ENCODE measurements at regions of chr6 and their contacts with region 1.

Region 1: DNA sequence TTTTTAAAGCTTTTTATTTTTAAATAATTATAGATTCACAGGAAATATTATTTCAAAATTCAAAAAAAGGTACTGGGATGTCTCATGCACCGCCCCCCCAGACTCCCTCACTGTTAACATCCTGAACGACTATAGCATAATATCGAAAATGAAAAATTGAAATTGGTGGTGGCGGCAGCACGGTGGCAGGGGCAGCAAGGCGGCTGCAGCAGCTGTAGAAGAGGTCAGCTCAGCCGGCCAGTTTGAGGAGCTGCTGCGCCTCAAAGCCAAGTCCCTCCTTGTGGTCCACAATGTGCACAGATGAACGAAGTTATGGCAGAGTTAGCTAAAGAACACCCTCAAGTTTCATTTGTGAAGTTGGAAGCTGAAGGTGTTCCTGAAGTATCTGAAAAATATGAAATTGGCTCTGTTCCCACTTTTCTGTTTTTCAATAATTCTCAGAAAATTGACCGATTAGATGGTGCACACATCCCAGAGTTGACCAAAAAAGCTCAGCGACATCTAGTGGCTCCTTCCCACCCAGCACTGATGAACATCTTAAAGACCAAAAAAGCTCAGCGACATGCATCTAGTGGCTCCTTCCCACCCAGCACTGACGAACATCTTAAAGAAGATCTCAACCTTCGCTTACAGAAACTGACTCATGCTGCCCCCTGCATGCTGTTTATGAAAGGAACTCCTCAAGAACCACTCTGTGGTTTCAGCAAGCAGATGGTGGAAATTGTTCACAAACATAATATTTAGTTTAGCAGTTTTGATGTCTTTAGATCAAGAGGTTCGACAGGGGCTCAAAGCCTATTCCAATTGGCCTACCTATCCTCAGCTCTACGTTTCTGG is 100.8 kb downstream of the FAM217A start:
- DNase-seq: peak; percentile 89
- H3K4me3 ChIP-seq: no peak overlapping the region
- H3K27ac ChIP-seq: no peak overlapping the region
- H3K27me3 ChIP-seq: no peaks in the 10 kb centered on the region
- CTCF ChIP-seq: peak; percentile 76

Region 2: GRCh38 chr6:3742426-3743344 is 235.4 kb before region 1 on chr6:
- CTCF ChIA-PET with region 1: interaction called, 86 read pairs
- POLR2A ChIA-PET with region 1: no interaction called
- DNase-seq: no peak
- H3K4me3 ChIP-seq: no peak overlapping the region; the same call in 1 of the 2 replicates
- H3K27ac ChIP-seq: no peak overlapping the region
- H3K27me3 ChIP-seq: no peaks in the 10 kb centered on the region
- CTCF ChIP-seq: peak; percentile 92

Region 3: DNA sequence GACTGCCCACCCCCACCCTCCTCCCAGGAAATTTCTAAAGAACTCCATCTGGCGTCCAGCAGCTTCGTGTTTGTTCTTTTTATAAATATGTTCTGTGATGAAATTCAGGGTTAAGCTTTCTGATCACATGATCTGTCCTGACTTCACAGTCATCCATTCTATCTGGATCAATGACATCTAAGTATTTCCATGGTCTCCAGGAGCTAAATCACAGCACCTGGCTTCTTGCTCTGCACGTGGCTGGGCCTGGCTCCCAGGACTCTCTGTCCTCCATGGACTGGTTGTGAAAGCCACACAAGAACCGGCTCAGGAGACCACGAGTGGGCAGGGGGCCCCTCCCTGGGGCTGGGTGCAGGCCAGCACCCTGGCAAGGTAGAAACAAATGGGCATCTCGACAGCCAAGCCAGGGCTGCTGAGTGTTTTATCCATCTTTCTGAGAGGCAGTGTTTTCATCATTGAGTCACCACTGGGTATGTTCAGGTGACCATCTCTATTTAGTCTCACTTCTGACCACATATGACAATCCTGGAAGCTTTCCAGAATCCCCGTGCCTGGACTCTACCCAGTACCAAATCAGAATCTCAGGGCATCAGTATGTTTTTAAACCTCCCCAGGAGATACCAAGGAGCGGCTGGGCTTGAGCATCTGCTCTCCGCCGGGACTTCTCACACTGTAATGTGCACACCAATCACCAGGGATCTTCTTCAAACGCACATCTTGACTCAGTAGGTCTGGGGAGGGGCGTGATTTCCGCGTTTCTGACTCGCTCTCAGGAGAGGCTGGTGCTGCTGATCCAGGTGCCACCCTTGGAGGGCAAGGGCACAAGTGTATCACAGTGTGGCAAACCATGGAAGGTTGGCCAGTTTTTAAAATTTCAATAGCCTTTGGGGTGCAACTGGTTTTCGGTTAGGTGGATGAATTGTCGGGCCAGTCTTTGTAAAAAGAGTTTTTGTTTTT is 194.9 kb before region 1 on chr6:
- CTCF ChIA-PET with region 1: no interaction called
- POLR2A ChIA-PET with region 1: no interaction called
- DNase-seq: peak; percentile 44
- H3K4me3 ChIP-seq: no peak overlapping the region
- H3K27ac ChIP-seq: peak overlapping the region; percentile 52
- H3K27me3 ChIP-seq: no peaks in the 10 kb centered on the region
- CTCF ChIP-seq: no peak

Region 4: GRCh38 chr6:3848925-3849605 is 129.0 kb before region 1 on chr6 and contains the start of gene FAM50B:
- CTCF ChIA-PET with region 1: interaction called, 70 read pairs
- POLR2A ChIA-PET with region 1: interaction called, 7 read pairs
- DNase-seq: peak; percentile 57
- H3K4me3 ChIP-seq: peak within 1 kb of the TSS; percentile 64
- H3K27ac ChIP-seq: peak within 1 kb of the TSS; percentile 65
- H3K27me3 ChIP-seq: no peaks in the 10 kb centered on the region
- CTCF ChIP-seq: peak; percentile 80
- polyA plus RNA-seq, gene FAM50B: 4.5 and 5.5 TPM in 2 replicates

Region 5: DNA sequence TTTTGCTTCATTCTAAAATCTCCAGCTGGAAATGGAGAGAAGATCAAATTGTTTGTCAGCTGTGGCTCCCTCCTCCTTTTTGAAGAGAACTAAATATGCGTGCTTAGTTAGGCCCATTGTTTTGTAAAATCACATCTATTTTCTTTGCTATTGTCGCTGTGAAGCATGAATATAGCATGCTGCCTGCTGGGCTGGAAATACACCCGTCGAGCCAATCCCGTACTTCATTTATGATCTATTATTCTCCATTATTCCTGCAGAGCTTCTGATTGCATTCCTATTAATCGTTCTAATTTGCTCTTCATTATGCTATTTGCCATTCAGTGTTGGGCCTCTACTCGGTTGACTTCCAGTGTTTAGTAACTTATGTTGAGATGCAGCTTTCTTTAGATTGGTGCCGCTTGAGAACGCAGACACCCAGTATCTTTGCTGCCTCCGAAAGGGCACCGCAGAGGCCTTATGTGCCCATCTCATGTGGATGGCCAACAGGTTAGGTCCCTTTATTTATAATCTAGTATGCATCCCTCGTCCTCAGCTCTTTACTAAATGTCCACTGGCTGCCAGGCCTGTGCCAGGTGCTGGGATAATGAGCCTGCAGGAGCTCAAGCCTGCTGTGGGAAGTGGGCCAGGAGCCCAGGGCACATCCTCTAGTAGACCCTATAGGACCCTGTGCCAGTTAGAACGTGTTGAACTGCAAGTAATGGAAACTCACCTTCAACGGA is 83.3 kb before region 1 on chr6:
- CTCF ChIA-PET with region 1: interaction called, 19 read pairs
- POLR2A ChIA-PET with region 1: no interaction called
- DNase-seq: no peak
- H3K4me3 ChIP-seq: no peak overlapping the region
- H3K27ac ChIP-seq: no peak overlapping the region
- H3K27me3 ChIP-seq: no peaks in the 10 kb centered on the region
- CTCF ChIP-seq: no peak

Region 6: DNA sequence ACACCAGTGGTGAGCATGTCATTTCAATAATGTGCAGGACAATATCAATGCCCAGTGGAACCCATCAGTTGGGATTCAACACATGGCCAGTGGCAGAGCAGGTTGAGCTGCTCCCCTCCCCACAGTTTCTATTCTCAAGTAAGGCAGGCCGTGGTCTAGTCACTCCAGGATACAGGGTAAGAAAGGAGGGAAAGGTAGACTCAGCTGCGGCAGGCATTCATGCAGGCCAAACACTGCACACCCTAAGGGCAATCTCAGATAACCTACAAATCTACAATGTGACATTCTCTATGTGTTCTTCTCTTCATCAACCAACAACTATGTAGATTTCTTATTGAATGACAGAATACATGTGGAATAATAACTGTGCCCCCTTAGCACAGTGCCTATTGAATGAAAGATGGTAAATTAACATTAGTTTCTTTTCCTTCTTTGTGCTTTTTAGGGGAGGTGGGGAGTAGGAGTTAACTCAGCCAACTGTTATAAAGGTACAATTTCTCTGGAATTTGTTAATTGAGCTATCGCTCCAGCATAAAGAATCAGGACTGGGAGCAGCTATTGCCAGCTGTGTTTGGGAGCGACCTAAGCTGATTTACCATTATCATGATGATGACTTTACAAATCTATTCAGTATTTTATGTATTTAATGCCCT is 39.3 kb before region 1 on chr6:
- CTCF ChIA-PET with region 1: interaction called, 10 read pairs
- POLR2A ChIA-PET with region 1: interaction called, 3 read pairs
- DNase-seq: no peak
- H3K4me3 ChIP-seq: no peak overlapping the region
- H3K27ac ChIP-seq: no peak overlapping the region
- H3K27me3 ChIP-seq: no peaks in the 10 kb centered on the region
- CTCF ChIP-seq: no peak

Region 7: GRCh38 chr6:3962957-3963303 is 15.2 kb before region 1 on chr6:
- CTCF ChIA-PET with region 1: interaction called, 27 read pairs
- POLR2A ChIA-PET with region 1: no interaction called
- DNase-seq: no peak
- H3K4me3 ChIP-seq: no peak overlapping the region
- H3K27ac ChIP-seq: no peak overlapping the region
- H3K27me3 ChIP-seq: no peaks in the 10 kb centered on the region
- CTCF ChIP-seq: no peak

Region 8: GRCh38 chr6:3997177-3997770 is 19.2 kb after region 1 on chr6:
- CTCF ChIA-PET with region 1: interaction called, 10 read pairs
- POLR2A ChIA-PET with region 1: no interaction called
- DNase-seq: peak; percentile 39
- H3K4me3 ChIP-seq: peak overlapping the region; percentile 33
- H3K27ac ChIP-seq: no peak overlapping the region
- H3K27me3 ChIP-seq: no peaks in the 10 kb centered on the region
- CTCF ChIP-seq: no peak

Measured in AG04450 (cell line).